Calu3 (cell line): ENCODE measurements at regions of chr20 and their contacts with region 1.

Region 1: GRCh38 chr20:32031007-32031958 is 20.8 kb upstream of the HCK start:
- DNase-seq: peak; percentile 90
- H3K4me3 Mint-ChIP-seq: no peak overlapping the region
- H3K27ac Mint-ChIP-seq: no peak overlapping the region
- H3K4me1 Mint-ChIP-seq: peaks cover 13% of the 10 kb centered on the region
- H3K27me3 Mint-ChIP-seq: peaks cover 79% of the 10 kb centered on the region
- CTCF ChIP-seq: peak; percentile 100

Region 2: GRCh38 chr20:31822421-31823330 is 208.6 kb before region 1 on chr20:
- CTCF ChIA-PET with region 1: interaction called, 10 read pairs
- intact Hi-C with region 1: loop called (anchors 1 kb)
- DNase-seq: peak; percentile 88
- H3K4me3 Mint-ChIP-seq: peak overlapping the region; percentile 35
- H3K27ac Mint-ChIP-seq: no peak overlapping the region
- H3K4me1 Mint-ChIP-seq: no peaks in the 10 kb centered on the region
- H3K27me3 Mint-ChIP-seq: no peaks in the 10 kb centered on the region
- CTCF ChIP-seq: peak; percentile 100

Region 3: GRCh38 chr20:32018269-32019074 is 12.8 kb before region 1 on chr20:
- CTCF ChIA-PET with region 1: interaction called, 13 read pairs
- intact Hi-C with region 1: no loop called
- DNase-seq: peak; percentile 95
- H3K4me3 Mint-ChIP-seq: peak overlapping the region; percentile 88
- H3K27ac Mint-ChIP-seq: peak overlapping the region; percentile 29
- H3K4me1 Mint-ChIP-seq: no peaks in the 10 kb centered on the region
- H3K27me3 Mint-ChIP-seq: peaks cover 95% of the 10 kb centered on the region
- CTCF ChIP-seq: no peak

Region 4: DNA sequence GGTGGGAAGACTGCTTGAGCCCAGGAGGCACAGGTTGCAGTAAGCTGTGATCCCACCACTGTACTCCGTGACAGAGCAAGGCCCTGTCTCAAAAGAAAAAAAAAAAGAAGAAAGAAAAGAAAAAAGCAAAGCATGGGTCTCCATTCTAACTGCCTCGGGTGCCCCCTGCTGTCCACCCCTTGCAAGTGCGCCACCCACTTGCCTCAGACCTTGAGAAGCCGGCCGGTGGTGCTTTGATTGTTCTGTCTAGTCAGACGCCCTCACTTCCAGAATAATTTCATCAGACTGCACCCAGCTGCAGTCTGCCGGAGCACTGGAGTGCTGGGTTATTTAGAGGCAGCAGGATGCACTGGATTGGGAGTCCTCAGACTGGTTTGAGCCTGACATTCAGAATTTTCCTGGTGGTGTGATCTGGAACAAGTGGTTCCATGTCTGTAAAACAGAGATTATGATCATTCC is 60.6 kb after region 1 on chr20:
- CTCF ChIA-PET with region 1: interaction called, 4 read pairs
- intact Hi-C with region 1: loop called (anchors 5 kb)
- DNase-seq: peak; percentile 91
- H3K4me3 Mint-ChIP-seq: no peak overlapping the region
- H3K27ac Mint-ChIP-seq: no peak overlapping the region
- H3K4me1 Mint-ChIP-seq: no peaks in the 10 kb centered on the region
- H3K27me3 Mint-ChIP-seq: peaks cover 40% of the 10 kb centered on the region
- CTCF ChIP-seq: peak; percentile 98

Region 5: GRCh38 chr20:32652739-32653526 is 621.6 kb after region 1 on chr20:
- CTCF ChIA-PET with region 1: no interaction called
- intact Hi-C with region 1: loop called (anchors 10 kb)
- DNase-seq: peak; percentile 95
- H3K4me3 Mint-ChIP-seq: no peak overlapping the region
- H3K27ac Mint-ChIP-seq: no peak overlapping the region
- H3K4me1 Mint-ChIP-seq: peaks cover 8% of the 10 kb centered on the region
- H3K27me3 Mint-ChIP-seq: peaks cover 46% of the 10 kb centered on the region
- CTCF ChIP-seq: peak; percentile 99